Posterior cingulate gyrus (tissue), 11 donors: ENCODE measurements at regions of chr13 and their contacts with region 1.

Region 1: DNA sequence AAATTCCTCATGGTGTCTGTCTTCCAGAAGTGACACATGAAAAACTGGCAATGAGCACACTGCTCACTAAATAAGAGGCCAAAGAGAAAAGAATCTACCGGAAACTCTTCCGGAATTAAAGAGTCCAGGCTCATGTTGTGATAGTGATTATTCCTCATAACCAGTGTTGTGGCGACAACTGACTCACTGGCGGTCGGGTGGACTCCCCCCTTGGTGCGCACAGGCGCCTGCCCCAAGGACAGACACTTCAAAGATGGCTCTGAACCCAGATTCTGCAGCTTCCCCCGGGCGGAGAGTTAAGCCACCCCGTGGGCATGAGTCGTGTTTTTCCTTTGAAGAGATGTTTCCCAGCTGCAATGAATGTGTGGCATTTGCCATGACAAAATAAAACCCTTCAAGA is 10.3 kb downstream of the IL17D start:
- DNase-seq: peak in 4 of 10 donors; percentile 36 to 88 (median 42)

Region 2: DNA sequence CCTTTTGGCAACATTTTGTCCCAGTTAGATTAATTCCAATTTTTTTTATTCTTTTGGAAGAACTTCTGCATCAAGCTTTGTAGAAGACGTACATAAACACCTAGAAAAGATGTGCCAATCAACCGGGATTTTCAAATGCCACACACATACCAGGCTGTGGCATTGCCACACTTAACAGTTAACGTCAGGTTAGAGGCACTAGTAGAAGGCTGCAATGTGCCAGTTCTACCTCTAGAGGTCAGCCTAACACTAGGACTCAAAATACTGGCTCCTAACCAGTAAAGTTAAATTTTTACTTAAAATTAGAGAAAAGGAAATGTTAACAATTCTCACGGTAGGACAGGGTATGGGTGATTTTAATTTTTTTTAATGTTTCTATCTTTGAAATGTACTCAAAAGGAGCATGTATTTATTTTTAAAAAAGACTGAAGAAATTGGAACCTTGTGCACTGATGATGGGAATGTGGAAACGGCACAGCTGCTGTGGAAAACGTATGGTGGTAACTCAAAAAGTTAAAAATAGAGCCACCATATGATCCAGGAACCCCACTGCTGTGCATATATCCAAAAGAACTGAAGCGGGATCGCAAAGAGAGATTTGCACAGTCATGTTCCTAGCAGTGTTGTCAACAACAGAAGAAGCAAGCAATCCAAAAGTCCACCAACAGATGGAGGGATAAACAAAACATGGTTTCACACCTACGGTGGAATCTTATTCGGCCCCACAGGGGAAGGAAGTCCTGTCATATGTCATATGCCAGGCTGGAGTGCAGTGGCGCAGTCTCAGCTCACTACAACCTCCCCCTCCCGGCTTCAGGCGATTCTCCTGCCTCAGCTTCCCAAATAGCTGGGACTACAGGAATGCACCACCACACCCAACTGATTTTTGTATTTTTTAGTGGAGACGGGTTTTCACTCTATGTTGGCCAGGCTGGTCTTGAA is 218.4 kb before region 1 on chr13:
- intact Hi-C with region 1: loop called (anchors 2 kb)
- DNase-seq: peak in 8 of 10 donors; percentile 29 to 87 (median 63)

Region 3: DNA sequence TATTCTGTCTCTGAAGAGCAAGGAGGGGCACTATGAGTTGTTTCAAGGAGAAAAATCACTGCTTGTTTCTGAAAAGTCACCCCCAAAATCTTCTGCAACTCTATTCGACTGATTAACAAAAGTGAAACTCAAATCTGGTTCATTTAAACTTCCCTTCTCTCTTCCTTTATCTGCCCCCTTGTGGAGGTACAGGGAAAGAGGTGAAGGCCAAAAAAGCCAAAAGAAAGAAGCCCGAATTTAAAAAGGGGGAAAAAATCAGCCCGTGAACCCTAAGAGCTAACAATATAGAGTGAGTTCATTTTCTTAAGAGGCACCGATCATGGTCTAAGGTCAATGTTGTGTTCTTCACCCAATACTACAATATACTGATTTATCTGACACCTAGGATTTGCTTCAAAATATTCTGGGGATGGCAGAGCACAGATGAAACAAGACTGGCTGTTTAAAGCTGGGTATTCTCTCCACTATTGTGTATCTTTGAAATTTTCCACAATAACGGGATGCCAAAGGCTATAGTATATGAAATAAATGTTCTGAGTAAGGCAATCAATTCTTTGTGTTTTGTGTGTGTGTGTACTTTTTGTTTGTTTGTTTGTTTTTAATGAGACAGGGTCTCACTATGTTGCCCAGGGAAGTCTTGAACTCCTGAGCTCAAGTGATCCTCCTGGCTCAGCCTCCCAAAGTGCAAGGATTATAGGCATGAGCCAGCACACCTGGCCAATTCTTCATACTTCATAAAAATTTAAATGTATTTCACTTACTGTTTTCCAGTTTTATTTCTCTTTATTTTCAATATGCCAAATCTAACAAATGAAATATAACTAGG is 115.0 kb after region 1 on chr13:
- intact Hi-C with region 1: loop called (anchors 2 kb)
- DNase-seq: no peak

Region 4: GRCh38 chr13:20869542-20869941 is 155.8 kb after region 1 on chr13:
- intact Hi-C with region 1: loop called (anchors 2 kb)
- DNase-seq: no peak